Heart right ventricle (tissue), 16 donors: ENCODE measurements at regions of chr10 and their contacts with region 1.

Region 1: GRCh38 chr10:36036137-36036536 is 394.0 kb upstream of the FZD8 start:
- DNase-seq: no peak
- ATAC-seq: no peak
- H3K4me3 ChIP-seq: no peak overlapping the region
- H3K27ac ChIP-seq: no peak overlapping the region
- H3K4me1 ChIP-seq: no peaks in the 10 kb centered on the region
- H3K27me3 ChIP-seq: no peaks in the 10 kb centered on the region
- CTCF ChIP-seq: no peak

Region 2: GRCh38 chr10:36003688-36004087 is 32.4 kb before region 1 on chr10:
- intact Hi-C with region 1: loop called in 1 of 10 experiments (anchors 1 kb)
- DNase-seq: no peak
- ATAC-seq: no peak
- H3K4me3 ChIP-seq: no peak overlapping the region
- H3K27ac ChIP-seq: no peak overlapping the region
- H3K4me1 ChIP-seq: peaks cover 0 to 4% (median 0%) of the 10 kb centered on the region in 9 donors
- H3K27me3 ChIP-seq: no peaks in the 10 kb centered on the region
- CTCF ChIP-seq: no peak